Activated CD8-positive, alpha-beta T cell treated with anti-CD3 and anti-CD28 coated beads for 36 hours (primary cell): ENCODE measurements at regions of chr11 and their contacts with region 1.

Region 1: GRCh38 chr11:123159183-123159857 is 35.7 kb downstream of the CLMP start:
- DNase-seq: peak; percentile 72
- ATAC-seq: peak; percentile 88
- H3K4me3 Mint-ChIP-seq: no peak overlapping the region
- H3K27ac Mint-ChIP-seq: peak overlapping the region; percentile 68
- H3K4me1 Mint-ChIP-seq: peaks cover 17% of the 10 kb centered on the region
- H3K27me3 Mint-ChIP-seq: peaks cover 1% of the 10 kb centered on the region
- CTCF ChIP-seq: no peak

Region 2: DNA sequence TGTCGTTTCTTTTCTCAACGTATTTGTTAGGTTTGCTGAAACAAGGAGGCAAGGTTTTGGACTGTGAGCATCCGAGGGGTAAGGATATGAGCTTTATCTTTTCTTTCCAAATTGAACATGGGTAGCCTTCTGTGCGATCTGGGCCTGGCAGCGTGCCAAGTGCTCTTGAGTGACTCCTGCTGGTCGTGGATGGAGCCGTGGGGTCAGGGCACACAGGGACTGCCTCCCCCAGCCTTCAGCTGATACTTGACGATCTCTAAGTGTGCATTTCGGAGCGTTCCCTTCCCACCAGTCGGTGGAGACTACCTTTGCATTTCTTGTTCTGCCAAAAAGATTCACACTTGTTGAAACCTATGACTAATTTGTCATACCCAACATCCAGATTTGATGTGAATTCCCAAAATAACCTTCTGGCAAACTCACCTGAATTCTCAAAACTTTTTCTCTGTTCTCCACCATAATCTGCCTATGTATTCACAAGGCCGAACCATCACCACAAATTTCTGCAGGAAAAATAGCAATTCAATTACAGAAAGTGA is 75.9 kb after region 1 on chr11:
- CTCF ChIA-PET with region 1: no interaction called
- POLR2A ChIA-PET with region 1: no interaction called
- intact Hi-C with region 1: loop called (anchors 5 kb)
- DNase-seq: peak; percentile 60
- ATAC-seq: no peak
- H3K4me3 Mint-ChIP-seq: no peak overlapping the region
- H3K27ac Mint-ChIP-seq: no peak overlapping the region
- H3K4me1 Mint-ChIP-seq: peaks cover 16% of the 10 kb centered on the region
- H3K27me3 Mint-ChIP-seq: no peaks in the 10 kb centered on the region
- CTCF ChIP-seq: no peak